AG04449 (cell line): ENCODE measurements at regions of chr1 and their contacts with region 1.

Region 1: GRCh38 chr1:1441002-1441888 is 5.8 kb downstream of the VWA1 start:
- DNase-seq: no peak
- H3K4me3 ChIP-seq: no peak overlapping the region
- CTCF ChIP-seq: peak; percentile 89

Region 2: DNA sequence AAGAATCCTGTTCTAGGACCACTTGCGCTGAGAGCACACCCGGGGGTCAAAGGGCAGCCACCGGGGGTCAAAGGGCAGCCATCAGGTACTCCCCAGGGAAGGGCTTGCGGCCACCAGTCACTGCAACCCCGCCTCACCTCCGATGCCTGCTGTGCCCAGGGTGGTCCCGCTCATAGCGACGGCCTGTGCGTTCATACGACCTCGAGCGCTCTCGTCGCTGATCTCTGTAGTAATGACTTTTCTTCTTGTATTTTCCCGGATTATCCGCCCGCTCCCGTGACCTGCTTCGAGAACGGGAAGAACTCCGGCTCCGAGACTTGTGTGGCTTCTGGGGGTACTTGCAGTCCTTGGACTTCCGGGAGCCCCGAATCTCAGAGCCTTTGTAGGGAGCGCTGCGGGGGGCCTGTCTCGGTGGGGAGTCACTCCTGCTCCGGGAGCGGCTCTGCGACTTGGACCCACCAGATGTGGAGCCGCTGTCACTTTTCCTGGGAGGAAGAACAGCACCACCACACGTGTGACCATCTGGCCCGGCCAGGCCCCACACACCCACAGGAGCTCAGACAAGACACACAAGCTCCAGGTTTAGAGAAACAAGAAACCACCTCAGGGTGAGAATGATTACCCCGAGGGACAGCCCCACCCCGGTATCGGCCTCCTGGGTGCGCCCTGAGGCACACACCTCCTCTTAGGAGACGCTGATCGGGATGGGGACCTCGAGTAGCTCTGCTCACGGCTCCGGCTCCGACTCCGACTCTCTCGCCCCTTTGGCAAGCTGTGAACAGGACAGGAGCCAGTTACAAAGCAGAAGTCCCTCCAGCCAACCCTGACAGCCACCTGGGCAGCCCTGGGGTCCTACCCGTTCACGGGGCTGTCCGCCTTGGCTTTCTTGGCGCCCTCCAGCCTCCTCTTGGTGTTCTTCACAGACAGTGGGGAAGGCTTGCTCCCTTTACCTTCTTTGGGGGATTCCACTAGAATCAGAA is 53.9 kb before region 1 on chr1:
- CTCF ChIA-PET with region 1: no interaction called
- POLR2A ChIA-PET with region 1: no interaction called
- DNase-seq: no peak
- H3K4me3 ChIP-seq: no peak overlapping the region
- CTCF ChIP-seq: no peak

Region 3: DNA sequence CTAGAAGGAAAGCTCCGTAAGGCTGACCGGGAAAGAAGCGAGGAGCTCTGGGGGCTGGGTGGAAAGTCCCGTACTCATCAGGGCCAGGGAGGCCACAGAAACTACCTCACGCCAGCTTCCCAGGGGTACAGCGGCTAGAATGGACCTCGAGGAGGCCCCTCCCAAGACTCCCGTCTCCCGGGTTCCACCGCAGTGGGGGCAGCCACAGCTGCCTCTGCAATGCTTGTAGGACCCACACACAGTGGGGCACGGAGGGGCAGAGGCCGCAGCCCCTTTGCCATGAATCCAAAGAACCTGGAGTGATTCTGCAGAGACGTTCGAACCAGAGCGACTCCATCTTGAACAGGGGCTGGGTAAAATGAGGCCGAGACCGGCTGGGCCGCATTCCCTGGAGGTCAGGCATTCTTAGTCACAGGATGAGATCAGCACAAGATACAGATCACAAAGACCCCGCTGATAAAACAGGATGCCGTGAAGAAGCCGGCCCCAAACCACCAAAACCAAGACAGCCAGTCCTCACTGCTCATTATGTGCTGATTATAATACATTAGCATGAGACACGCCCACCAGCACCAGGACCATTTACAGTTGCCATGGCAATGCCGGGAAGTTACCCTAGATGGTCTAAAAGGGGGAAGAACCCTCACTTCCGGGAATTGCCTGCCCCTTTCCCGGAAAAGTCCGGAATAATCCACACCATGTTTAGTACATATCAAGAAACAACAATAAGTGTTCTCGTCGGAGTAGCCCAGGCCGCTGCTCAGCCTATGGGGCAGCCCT is 18.6 kb before region 1 on chr1:
- CTCF ChIA-PET with region 1: interaction called, 10 read pairs
- POLR2A ChIA-PET with region 1: no interaction called
- DNase-seq: no peak
- H3K4me3 ChIP-seq: no peak overlapping the region
- CTCF ChIP-seq: no peak

Region 4: DNA sequence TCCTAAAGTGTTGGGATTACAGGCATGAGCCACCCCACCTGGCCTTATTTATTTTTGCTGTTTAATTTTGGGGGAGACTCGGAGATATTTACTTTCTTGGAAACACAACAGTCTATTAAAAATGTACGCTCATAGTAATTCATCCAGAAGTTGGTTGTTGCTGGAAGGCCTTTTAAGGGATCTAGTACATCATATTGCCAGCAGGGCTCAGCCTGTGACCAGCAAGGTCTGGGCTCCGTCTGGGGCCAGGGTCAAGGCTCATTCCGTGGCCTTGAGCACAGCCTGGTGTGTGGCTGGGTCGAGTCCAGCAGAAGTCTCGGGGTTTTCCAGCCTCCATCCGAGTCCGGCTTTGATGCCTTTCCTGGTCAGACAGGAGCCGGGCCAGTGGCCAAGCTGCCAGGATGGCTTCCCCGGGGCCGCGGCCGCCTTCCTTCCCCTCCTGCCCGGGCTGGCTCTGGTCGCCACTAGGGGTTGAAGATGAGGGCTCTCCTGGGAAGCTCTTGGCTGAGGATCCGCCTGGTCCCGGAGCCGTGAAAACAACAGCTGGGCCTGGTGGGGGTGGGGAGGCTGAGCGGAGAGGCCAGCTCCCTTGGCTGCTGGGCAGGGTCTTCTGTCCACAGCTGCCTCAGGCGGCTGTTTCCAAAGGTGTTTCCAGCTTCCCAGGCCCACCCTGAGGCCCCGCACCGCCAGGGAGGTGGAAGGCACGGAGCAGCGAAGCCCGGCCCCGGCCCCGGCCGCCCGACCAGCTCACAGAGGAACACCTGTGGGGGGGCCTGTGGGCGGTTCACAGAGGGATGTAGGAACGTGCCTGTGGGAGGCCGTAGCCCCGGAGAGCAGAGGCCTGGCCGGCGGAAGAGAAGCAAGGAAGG is 10.9 kb before region 1 on chr1:
- CTCF ChIA-PET with region 1: interaction called, 22 read pairs
- POLR2A ChIA-PET with region 1: no interaction called
- DNase-seq: no peak
- H3K4me3 ChIP-seq: no peak overlapping the region
- CTCF ChIP-seq: peak; percentile 29

Region 5: DNA sequence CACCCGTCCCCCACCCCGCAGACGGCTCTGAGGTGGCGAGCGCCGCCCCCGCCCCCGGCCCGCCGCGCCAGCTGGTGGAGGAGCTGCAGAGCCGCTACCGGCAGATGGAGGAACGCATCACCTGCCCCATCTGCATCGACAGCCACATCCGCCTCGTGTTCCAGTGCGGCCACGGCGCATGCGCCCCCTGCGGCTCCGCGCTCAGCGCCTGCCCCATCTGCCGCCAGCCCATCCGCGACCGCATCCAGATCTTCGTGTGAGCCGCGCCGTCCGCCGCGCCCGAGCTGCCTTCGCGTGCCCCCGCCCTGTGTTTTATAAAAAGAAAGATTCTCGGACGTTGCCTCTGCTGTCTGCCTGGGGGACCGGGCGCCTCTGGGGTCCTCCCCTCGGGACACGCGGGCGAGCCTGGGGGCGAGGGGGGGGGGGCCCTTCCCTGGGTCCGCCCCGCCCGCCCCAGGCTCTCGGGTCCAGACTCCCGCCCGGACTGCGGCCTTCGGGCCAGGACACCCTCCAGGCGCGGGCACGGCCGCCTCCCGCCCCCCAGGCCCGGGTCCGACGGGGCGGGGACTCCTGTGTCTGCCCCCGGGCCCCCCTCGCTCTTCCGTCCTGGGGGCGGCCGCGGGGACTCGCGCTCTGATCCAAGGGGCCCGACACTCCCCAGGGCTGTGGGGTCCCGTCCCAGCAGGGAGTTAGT is 189.2 kb after region 1 on chr1:
- CTCF ChIA-PET with region 1: no interaction called
- POLR2A ChIA-PET with region 1: no interaction called
- DNase-seq: no peak
- H3K4me3 ChIP-seq: no peak overlapping the region
- CTCF ChIP-seq: no peak